Caki2 (cell line): ENCODE measurements at regions of chr1 and their contacts with region 1.

Region 1: GRCh38 chr1:168603501-168604110 is 27.2 kb downstream of the XCL1 start:
- DNase-seq: peak; percentile 60

Region 2: DNA sequence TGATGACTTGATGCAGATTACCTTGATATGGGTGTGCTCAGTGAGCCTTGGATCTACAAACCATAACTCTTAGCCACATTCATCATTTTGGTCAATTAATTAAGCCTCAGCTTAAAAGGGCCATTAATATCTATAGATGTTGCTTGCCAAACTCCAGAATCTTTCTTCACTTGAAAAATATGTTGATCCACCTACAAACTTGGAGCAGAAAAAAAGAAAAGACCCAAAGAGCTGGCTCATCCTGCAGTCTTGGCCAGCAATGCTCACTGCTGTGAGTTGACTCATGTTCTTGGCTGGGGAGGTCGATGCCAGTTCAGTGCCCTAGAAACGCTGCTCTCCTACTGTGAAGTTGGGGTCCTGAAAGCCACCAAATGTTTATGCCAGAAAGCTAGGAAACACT is 50.0 kb after region 1 on chr1:
- in situ Hi-C with region 1: no loop called
- DNase-seq: no peak

Region 3: GRCh38 chr1:169133801-169134502 is 530.3 kb after region 1 on chr1:
- in situ Hi-C with region 1: loop called (anchors 25 kb)
- DNase-seq: no peak